Activated B cell treated with CpG ODN at 0.5 μM for 24 hours (primary cell): ENCODE measurements at regions of chr6 and their contacts with region 1.

Region 1: DNA sequence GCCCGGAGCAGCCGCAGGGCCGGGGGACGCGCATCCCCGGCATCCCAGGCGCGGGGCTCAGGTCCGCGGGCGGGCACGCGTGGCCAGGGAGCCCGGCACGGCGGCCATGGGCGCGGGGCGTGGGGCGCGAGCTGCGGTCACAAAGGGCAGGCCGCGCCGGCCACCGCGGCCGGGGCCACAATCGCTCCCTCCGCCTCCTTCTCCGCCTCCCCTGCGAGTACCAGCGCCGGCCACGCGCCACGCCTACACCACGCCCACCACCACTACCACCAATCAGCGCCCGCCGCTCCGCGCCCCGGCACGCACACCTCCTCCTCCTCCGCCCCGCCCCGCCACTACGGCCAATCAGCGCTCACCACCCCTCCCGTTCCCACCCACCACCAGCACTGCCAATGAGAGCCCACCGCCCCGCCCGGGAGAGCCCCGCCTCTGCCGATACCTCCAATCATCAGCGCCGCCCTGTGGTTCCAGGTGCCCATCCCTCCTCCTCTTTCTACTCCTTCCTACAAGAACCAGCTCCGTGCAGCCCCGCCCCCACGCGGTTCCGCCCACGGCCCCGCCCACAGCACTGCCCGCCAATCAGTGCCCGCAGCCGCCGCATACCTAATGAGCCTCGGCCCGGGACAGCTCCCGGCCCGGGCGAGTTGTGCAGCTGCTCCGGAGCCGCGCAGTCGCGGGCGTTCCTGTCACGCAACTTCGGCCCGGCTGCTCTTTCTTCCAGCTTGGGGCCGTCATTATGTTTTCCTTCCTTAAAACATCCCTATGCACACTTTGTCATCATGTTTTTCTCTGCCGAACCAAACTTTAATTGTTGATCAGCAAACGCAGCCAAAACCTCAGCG is at the start of gene RPS6KA2:
- DNase-seq: peak; percentile 100
- ATAC-seq: peak; percentile 93
- H3K4me3 Mint-ChIP-seq: peak within 1 kb of the TSS; percentile 91
- H3K27ac Mint-ChIP-seq: peak within 1 kb of the TSS; percentile 91
- H3K4me1 Mint-ChIP-seq: peaks cover 22% of the 10 kb centered on the region
- H3K27me3 Mint-ChIP-seq: peaks cover 32% of the 10 kb centered on the region
- CTCF ChIP-seq: no peak
- total RNA-seq, gene RPS6KA2: 13.9 and 14.4 TPM in 2 replicates

Region 2: GRCh38 chr6:166342349-166343149 is 284.7 kb before region 1 on chr6 and contains the start of gene SFT2D1:
- CTCF ChIA-PET with region 1: no interaction called
- POLR2A ChIA-PET with region 1: no interaction called
- intact Hi-C with region 1: loop called (anchors 5 kb)
- DNase-seq: peak; percentile 84
- ATAC-seq: peak; percentile 77
- H3K4me3 Mint-ChIP-seq: peak within 1 kb of the TSS; percentile 92
- H3K27ac Mint-ChIP-seq: peak within 1 kb of the TSS; percentile 89
- H3K4me1 Mint-ChIP-seq: peaks cover 16% of the 10 kb centered on the region
- H3K27me3 Mint-ChIP-seq: no peaks in the 10 kb centered on the region
- CTCF ChIP-seq: no peak
- total RNA-seq, gene SFT2D1: 44.6 and 49.5 TPM in 2 replicates

Region 3: DNA sequence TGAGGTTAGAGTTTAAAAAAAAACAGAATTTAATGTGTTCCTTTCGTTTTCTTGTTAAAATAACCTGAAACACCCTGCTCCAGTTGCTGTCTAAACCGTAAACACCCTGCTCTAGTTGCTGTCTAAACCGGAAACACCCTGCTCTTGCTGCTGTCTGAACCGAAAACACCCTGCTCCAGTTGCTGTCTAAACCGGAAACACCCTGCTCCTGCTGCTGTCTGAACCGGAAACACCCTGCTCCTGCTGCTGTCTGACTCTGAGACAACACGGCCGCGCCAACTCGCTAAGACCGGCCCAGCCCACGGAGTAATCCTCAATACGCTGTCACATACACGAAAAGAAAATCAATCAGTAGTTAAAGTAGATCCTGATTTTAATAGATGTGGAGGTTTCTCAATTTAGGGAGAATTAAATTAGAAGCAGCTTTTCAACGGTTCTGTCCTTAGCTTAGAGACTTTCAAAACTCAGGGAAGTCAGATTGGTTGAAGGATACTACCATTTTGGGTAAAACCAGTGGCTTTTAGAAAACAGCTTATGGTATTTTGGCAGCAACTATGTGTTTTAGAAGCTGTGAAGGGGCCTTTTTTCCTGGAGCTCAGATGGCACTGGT is 139.1 kb before region 1 on chr6:
- CTCF ChIA-PET with region 1: interaction called, 4 read pairs
- POLR2A ChIA-PET with region 1: interaction called, 13 read pairs
- intact Hi-C with region 1: loop called (anchors 1 kb)
- DNase-seq: peak; percentile 37
- ATAC-seq: peak; percentile 97
- H3K4me3 Mint-ChIP-seq: peak overlapping the region; percentile 84
- H3K27ac Mint-ChIP-seq: peak overlapping the region; percentile 97
- H3K4me1 Mint-ChIP-seq: peaks cover 23% of the 10 kb centered on the region
- H3K27me3 Mint-ChIP-seq: no peaks in the 10 kb centered on the region
- CTCF ChIP-seq: no peak

Region 4: DNA sequence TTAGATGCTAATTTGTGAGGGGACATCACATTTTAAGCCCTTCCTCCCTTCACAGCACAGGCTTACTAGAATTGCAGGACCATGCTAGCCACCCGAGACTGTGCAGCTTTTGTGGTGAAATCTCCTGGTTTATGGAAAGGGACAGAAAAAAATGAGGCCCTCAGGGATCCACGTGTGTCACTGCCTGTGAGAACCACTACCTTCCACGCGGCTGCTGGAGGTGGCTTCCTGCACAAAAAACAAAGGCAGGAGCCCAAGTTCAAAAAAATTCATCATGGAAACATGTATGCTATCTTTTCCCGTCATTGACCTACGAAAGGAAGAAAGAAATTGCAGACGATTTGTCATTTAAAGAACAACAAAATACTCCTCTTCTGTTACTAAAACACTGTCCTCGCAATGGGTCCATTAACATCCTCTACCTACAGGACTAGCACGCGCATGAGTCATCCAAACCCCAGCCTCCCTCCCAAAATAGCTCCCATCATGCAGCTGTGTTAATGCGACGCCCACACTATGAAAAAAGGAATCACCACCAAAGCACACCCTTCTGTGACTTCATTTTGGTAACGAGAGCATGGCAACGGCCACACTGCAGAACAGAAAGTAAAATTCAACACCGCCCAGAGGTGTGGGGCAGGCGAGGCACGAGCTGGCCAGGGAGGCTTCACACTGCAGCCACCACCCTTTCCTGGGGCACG is 86.5 kb before region 1 on chr6:
- CTCF ChIA-PET with region 1: no interaction called
- POLR2A ChIA-PET with region 1: no interaction called
- intact Hi-C with region 1: loop called (anchors 1 kb)
- DNase-seq: peak; percentile 31
- ATAC-seq: peak; percentile 92
- H3K4me3 Mint-ChIP-seq: peak overlapping the region; percentile 78
- H3K27ac Mint-ChIP-seq: peak overlapping the region; percentile 79
- H3K4me1 Mint-ChIP-seq: peaks cover 23% of the 10 kb centered on the region
- H3K27me3 Mint-ChIP-seq: no peaks in the 10 kb centered on the region
- CTCF ChIP-seq: no peak

Region 5: GRCh38 chr6:166572370-166573261 is 54.6 kb before region 1 on chr6:
- CTCF ChIA-PET with region 1: no interaction called
- POLR2A ChIA-PET with region 1: no interaction called
- intact Hi-C with region 1: no loop called
- DNase-seq: no peak
- ATAC-seq: no peak
- H3K4me3 Mint-ChIP-seq: no peak overlapping the region
- H3K27ac Mint-ChIP-seq: no peak overlapping the region
- H3K4me1 Mint-ChIP-seq: no peaks in the 10 kb centered on the region
- H3K27me3 Mint-ChIP-seq: no peaks in the 10 kb centered on the region
- CTCF ChIP-seq: no peak

Region 6: DNA sequence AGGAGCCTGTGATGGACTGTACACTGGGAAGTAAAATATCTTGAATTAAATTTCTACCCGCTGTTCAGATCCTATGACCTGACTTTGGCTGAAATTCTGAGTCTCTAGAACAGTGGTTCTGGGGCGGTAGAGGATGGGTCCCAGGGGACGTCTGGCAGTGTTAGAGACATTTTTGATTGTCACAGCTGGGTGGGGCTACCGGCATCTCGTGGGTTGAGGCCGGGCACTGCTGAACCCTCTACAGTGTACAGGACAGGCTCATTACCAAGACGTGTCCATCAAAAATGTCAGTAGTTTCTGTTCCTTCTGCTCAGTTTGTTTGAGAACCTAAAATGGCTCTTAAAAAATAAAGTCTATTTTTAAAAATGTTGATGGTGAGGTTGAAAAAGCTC is 11.3 kb after region 1 on chr6:
- CTCF ChIA-PET with region 1: no interaction called
- POLR2A ChIA-PET with region 1: no interaction called
- intact Hi-C with region 1: loop called (anchors 1 kb)
- DNase-seq: no peak
- ATAC-seq: peak; percentile 86
- H3K4me3 Mint-ChIP-seq: no peak overlapping the region
- H3K27ac Mint-ChIP-seq: no peak overlapping the region
- H3K4me1 Mint-ChIP-seq: peaks cover 25% of the 10 kb centered on the region
- H3K27me3 Mint-ChIP-seq: peaks cover 48% of the 10 kb centered on the region
- CTCF ChIP-seq: no peak

Region 7: DNA sequence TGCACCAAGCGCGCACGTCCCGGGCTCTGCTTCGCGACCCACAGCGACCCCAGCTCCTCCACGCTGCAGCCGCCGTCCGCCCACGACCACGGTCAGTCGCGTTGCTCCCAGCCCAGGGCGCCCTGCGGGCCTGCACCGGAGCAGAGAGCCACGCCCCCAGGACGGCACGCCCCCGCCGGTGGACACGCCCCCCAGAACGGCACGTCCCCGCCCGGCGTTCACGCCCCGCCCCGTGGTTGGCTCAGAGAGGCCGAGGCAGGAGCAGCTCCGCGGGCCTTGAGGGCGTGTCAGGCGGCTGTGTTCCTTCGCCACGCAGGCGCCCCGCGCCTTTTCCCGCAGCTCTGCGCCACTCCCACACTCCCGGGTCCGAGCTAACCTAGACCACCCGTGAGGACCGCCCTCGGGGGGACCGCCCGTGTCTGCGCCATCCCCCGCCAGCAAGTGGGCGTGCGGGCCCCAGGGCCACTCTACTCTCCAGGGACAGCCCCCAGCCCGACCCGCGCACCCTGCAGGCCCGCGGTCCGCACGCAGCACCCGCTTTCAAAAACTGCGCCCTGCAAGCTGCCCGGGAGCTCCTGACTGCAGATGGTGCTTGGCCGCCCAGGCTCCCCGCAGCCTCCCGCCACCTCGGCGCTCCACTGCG is 329.3 kb after region 1 on chr6 and contains the start of gene RNASET2:
- CTCF ChIA-PET with region 1: no interaction called
- POLR2A ChIA-PET with region 1: interaction called, 4 read pairs
- intact Hi-C with region 1: loop called (anchors 1 kb)
- DNase-seq: peak; percentile 100
- ATAC-seq: peak; percentile 82
- H3K4me3 Mint-ChIP-seq: peak within 1 kb of the TSS; percentile 91
- H3K27ac Mint-ChIP-seq: peak within 1 kb of the TSS; percentile 100
- H3K4me1 Mint-ChIP-seq: peaks cover 76% of the 10 kb centered on the region
- H3K27me3 Mint-ChIP-seq: no peaks in the 10 kb centered on the region
- CTCF ChIP-seq: no peak
- total RNA-seq, gene RNASET2: 118 and 135 TPM in 2 replicates